Endothelial cell of umbilical vein (primary cell): ENCODE measurements at regions of chrX and their contacts with region 1.

Region 1: DNA sequence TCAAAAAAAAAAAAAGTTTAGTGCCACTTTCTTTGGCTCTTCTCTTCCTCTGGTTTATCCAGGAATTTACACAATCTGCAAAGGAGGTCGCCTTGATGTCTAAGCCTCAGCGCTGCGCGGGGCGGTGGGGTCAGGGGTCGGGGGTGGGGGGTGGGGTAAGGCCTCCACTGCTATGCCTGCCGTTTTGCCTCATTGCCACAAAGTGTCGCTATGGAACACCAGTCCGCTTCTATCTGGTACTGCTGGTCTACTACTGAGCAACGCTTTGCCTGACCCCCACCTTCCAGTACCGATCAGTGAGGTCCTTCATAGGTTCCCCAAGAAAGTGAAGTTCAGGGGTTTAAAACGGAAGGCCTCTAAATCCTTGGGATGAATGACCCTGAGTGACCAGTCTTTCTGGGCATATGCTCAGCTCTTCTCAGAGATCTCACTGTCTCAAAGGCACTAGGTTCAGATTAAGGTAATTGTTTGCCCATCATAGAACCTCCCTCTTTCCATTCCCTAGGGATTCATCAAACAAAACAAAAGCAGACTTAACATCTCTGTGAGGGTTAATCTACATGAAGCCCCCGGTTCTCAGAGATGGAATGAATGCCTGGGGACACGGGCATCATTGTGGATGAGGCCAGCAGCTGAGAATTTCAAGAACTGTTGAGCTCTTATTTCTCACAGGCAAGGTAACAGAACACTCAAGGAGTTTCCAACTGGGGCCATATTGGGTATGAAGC is 16.9 kb upstream of the TSR2 start:
- DNase-seq: peak; percentile 1
- H3K4me3 ChIP-seq: no peak overlapping the region
- H3K27ac ChIP-seq: no peak overlapping the region
- H3K4me1 ChIP-seq: no peaks in the 10 kb centered on the region
- H3K27me3 ChIP-seq: no peaks in the 10 kb centered on the region
- CTCF ChIP-seq: no peak
- POLR2A ChIP-seq: no peak

Region 2: DNA sequence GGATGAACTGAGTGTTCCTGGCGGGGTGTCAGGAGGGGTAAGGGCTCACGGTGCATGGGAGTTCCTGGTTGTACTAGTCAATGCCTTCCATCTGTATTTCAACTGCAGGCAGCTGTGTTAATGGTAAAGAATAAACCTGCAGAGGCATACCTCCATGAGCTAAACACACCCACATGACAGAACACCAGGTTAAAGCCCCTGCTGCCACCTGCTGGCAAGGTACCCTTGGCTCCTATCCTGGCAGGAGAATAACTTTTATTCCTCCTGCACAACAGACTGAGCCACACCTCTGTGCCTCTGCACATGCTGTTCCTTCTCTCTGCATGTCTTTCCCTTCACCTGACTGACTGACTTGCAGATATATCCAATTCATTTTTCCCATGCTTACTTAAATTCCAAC is 363.6 kb after region 1 on chrX:
- CTCF ChIA-PET with region 1: no interaction called
- POLR2A ChIA-PET with region 1: no interaction called
- dilution Hi-C with region 1: no loop called
- intact Hi-C with region 1: loop called (anchors 5 kb)
- DNase-seq: no peak
- H3K4me3 ChIP-seq: no peak overlapping the region
- H3K27ac ChIP-seq: no peak overlapping the region
- H3K4me1 ChIP-seq: no peaks in the 10 kb centered on the region
- H3K27me3 ChIP-seq: no peaks in the 10 kb centered on the region
- CTCF ChIP-seq: no peak
- POLR2A ChIP-seq: no peak

Region 3: GRCh38 chrX:54842607-54843006 is 419.3 kb after region 1 on chrX:
- CTCF ChIA-PET with region 1: no interaction called
- POLR2A ChIA-PET with region 1: no interaction called
- dilution Hi-C with region 1: no loop called
- intact Hi-C with region 1: no loop called
- DNase-seq: no peak
- H3K4me3 ChIP-seq: no peak overlapping the region
- H3K27ac ChIP-seq: no peak overlapping the region
- H3K4me1 ChIP-seq: no peaks in the 10 kb centered on the region
- H3K27me3 ChIP-seq: no peaks in the 10 kb centered on the region
- CTCF ChIP-seq: no peak
- POLR2A ChIP-seq: no peak